CD14-positive monocyte (primary cell): ENCODE measurements at regions of chr7 and their contacts with region 1.

Region 1: DNA sequence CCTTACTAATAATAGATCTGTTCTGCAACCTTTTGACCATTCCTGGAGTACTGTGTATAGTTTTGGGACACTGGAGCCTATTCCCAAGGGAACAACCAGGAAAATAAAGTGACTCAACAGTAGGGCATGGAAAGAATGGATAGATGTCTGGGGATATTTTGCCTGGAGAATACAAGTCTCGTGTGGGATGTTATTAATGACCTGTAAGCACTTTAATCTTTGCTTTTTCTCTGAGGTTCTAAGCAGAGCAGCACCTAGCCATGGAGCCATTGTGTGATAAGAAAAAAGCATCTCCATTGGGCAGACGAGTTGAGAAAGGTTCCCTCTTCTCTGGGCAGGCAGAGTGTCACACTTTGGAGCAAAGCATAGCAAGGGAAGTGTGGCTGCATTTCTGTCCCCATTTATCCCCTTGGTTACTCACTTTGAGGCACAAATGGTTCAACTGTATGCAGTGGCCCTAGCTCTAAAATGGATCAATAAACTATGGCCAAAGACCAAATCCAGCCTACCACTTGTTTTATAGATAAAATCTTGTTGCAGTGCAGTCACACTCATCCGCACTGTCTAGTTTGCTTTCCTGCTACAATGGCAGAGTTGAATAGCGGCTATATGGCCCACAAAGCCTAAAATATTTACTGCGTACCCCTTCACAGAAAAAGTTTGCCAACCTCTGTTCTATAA is 21.0 kb upstream of the CCDC71L start:
- DNase-seq: no peak
- H3K4me3 ChIP-seq: no peak overlapping the region
- H3K4me3 Mint-ChIP-seq: no peak overlapping the region
- H3K27ac ChIP-seq: no peak overlapping the region
- H3K27ac Mint-ChIP-seq: no peak overlapping the region
- H3K4me1 ChIP-seq: peaks cover 9 to 11% of the 10 kb centered on the region in 2 donors
- H3K4me1 Mint-ChIP-seq: peaks cover 14% of the 10 kb centered on the region
- H3K27me3 ChIP-seq: no peaks in the 10 kb centered on the region
- H3K27me3 Mint-ChIP-seq: no peaks in the 10 kb centered on the region
- CTCF ChIP-seq: no peak

Region 2: DNA sequence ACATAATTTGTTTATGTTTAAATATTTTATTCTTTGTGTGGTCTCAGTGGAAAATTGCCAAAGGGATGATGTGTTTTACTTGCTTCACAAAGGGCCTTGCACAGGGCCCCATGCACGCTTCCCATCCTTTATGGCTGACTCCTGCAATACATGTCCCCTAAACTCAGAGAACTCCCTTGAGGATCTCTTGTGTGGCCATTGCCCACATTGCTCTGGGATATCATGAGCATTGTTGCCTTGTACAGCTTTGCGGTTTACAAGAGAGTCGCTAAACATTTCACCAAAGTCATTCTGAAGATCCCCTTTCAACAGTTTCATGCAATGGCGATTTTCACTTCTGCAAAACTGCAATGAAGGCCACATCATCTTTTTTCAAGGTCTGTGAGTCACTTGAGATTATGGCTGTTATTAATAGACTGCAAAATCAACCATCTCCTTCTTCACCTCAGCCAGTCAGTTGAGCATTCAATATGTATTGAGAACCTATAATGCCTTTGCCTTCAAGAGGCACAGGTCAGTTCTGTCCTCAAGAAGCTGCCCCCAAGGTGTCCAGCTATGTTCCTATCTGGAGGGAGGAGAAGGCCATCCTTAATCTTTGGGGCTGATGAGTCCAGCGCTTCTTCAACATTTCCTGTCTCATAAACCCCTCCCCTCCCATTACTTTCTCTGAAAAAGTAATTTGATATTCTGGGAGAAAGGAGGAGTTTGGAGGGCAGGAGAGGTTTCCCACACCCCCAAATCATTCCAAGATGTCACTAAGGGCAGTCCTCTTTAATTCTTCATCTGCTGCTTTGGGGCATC is 129.1 kb before region 1 on chr7:
- intact Hi-C with region 1: no loop called
- DNase-seq: peak; percentile 85 to 94 (median 94)
- H3K4me3 ChIP-seq: peak overlapping the region in 1 of 3 experiments; percentile 49
- H3K4me3 Mint-ChIP-seq: no peak overlapping the region
- H3K27ac ChIP-seq: peak overlapping the region; percentile 32 to 87
- H3K27ac Mint-ChIP-seq: peak overlapping the region; percentile 86 to 95 (median 93)
- H3K4me1 ChIP-seq: peaks cover 26 to 30% of the 10 kb centered on the region in 2 donors
- H3K4me1 Mint-ChIP-seq: peaks cover 32% of the 10 kb centered on the region
- H3K27me3 ChIP-seq: no peaks in the 10 kb centered on the region
- H3K27me3 Mint-ChIP-seq: peaks cover 0 to 12% (median 9%) of the 10 kb centered on the region in 3 donors
- CTCF ChIP-seq: no peak

Region 3: DNA sequence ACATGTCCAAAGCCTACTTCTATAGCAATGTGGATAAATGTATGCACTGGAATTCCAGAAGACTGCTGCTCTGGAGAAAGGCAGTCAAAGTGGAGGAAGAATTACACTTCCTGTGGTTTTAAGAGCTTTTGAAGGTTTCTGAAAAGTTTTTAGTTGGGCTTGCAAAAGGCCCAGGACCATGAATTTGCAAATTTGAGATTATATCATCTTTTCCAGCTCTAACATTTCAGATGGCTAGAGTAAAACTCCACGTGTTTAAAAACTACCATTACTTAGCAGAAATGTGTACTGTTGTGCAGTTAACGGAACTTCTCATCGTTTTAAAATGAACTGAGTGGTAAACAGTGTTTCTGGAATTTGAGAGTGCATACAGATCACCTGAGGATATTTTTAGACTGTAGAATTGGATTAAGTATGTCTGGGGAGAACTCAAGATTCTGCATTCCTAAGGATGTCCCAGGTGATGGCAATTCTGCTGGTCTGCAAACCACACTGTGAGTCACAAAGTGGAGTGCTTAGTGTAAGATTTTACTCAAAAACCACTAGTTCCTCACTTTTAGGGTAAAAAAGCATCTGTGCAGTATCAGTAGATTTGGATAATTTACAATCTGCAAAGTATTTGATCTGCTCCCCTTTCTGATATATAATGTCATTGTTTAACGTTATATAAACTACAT is 11.9 kb after region 1 on chr7:
- intact Hi-C with region 1: no loop called
- DNase-seq: peak in 2 of 3 donors; percentile 26 to 29
- H3K4me3 ChIP-seq: no peak overlapping the region
- H3K4me3 Mint-ChIP-seq: no peak overlapping the region
- H3K27ac ChIP-seq: no peak overlapping the region
- H3K27ac Mint-ChIP-seq: no peak overlapping the region
- H3K4me1 ChIP-seq: peaks cover 14 to 25% of the 10 kb centered on the region in 2 donors
- H3K4me1 Mint-ChIP-seq: peaks cover 19% of the 10 kb centered on the region
- H3K27me3 ChIP-seq: no peaks in the 10 kb centered on the region
- H3K27me3 Mint-ChIP-seq: peaks cover 0 to 2% (median 0%) of the 10 kb centered on the region in 3 donors
- CTCF ChIP-seq: no peak

Region 4: GRCh38 chr7:106717955-106718871 is 36.3 kb after region 1 on chr7:
- intact Hi-C with region 1: loop called in 1 of 2 experiments (anchors 5 kb)
- DNase-seq: peak; percentile 92 to 98 (median 95)
- H3K4me3 ChIP-seq: peak overlapping the region in 1 of 3 experiments; percentile 44
- H3K4me3 Mint-ChIP-seq: no peak overlapping the region
- H3K27ac ChIP-seq: peak overlapping the region; percentile 64 to 93
- H3K27ac Mint-ChIP-seq: no peak overlapping the region
- H3K4me1 ChIP-seq: peaks cover 54 to 73% of the 10 kb centered on the region in 2 donors
- H3K4me1 Mint-ChIP-seq: peaks cover 31% of the 10 kb centered on the region
- H3K27me3 ChIP-seq: no peaks in the 10 kb centered on the region
- H3K27me3 Mint-ChIP-seq: peaks cover 0 to 4% (median 3%) of the 10 kb centered on the region in 3 donors
- CTCF ChIP-seq: no peak